Activated CD8-positive, alpha-beta memory T cell treated with anti-CD3 and anti-CD28 coated beads, Interleukin-2, amount 10 ng/mL, durations not matched to agents 7 days and 5 days (primary cell): ENCODE measurements at regions of chr17 and their contacts with region 1.

Region 1: GRCh38 chr17:64653325-64653984 is 8.7 kb downstream of the SMURF2 start:
- DNase-seq: no peak
- ATAC-seq: no peak
- H3K4me3 Mint-ChIP-seq: peak overlapping the region; percentile 58
- H3K27ac Mint-ChIP-seq: peak overlapping the region; percentile 84
- H3K4me1 Mint-ChIP-seq: peaks cover 51% of the 10 kb centered on the region
- H3K27me3 Mint-ChIP-seq: no peaks in the 10 kb centered on the region

Region 2: GRCh38 chr17:64506576-64507477 is 146.6 kb before region 1 on chr17 and contains the start of gene CEP95:
- CTCF ChIA-PET with region 1: interaction called, 17 read pairs
- DNase-seq: peak; percentile 98
- ATAC-seq: peak; percentile 72
- H3K4me3 Mint-ChIP-seq: peak within 1 kb of the TSS; percentile 100
- H3K27ac Mint-ChIP-seq: peak within 1 kb of the TSS; percentile 100
- H3K4me1 Mint-ChIP-seq: peaks cover 51% of the 10 kb centered on the region
- H3K27me3 Mint-ChIP-seq: peaks cover 2% of the 10 kb centered on the region
- total RNA-seq, gene CEP95: 45.7 to 52.6 TPM

Region 3: DNA sequence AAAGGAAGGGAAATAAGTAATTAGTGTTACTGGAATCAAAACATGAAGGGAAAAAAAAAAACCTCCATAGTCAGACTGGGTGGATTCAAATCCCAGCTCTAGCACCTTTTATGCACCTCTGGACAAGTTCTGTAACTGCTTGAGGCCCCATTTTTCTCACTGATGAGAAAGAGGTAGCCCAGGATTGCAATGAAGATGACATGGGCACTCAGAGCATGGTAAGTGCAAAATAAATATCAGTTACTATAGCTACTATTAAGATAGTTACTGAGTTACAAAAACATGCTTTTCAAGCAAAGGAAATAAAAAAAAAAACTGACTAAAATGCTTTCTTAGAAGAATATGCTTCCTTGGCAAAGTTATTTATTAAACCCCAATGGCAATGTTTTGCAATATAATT is 87.9 kb before region 1 on chr17:
- CTCF ChIA-PET with region 1: no interaction called
- DNase-seq: no peak
- ATAC-seq: no peak
- H3K4me3 Mint-ChIP-seq: no peak overlapping the region
- H3K27ac Mint-ChIP-seq: no peak overlapping the region
- H3K4me1 Mint-ChIP-seq: peaks cover 5% of the 10 kb centered on the region
- H3K27me3 Mint-ChIP-seq: no peaks in the 10 kb centered on the region

Region 4: DNA sequence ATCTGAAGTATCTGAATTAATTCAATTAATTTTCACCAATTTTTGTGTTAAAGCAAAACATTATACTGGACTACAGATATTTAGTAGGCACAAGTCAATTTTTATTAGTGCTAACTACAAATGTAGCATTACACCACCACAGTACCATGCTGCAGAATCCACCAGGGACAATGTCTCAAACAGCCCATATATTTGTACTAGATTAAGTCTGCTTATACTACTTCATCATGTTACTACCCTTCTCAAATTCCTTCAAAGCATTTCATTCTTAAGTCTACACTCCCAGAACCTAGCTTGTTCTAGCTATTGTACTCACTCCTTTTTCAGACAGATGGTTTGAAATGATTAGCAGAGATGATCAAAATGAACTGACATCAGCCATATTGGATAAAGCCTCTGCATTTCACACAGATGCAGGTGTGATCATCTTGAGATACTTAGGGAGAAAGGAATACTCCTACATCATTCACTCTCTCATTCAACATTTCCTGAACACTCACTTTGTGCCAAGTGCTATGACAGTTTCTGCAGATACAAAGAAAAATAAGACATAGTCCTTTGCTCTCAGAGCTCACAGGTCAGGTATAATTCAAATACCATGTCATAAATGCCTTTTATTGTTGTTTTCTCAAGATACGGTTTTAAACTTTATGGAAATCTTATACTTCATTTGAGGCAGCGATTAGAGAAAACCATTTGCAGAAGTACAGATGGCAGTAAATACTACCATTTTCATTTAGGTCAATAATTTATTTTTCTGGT is 39.0 kb before region 1 on chr17:
- CTCF ChIA-PET with region 1: no interaction called
- DNase-seq: no peak
- ATAC-seq: no peak
- H3K4me3 Mint-ChIP-seq: no peak overlapping the region
- H3K27ac Mint-ChIP-seq: no peak overlapping the region
- H3K4me1 Mint-ChIP-seq: peaks cover 1% of the 10 kb centered on the region
- H3K27me3 Mint-ChIP-seq: no peaks in the 10 kb centered on the region

Region 5: GRCh38 chr17:64628641-64629040 is 24.8 kb before region 1 on chr17:
- CTCF ChIA-PET with region 1: interaction called, 12 read pairs
- DNase-seq: peak; percentile 52
- ATAC-seq: peak; percentile 97
- H3K4me3 Mint-ChIP-seq: peak overlapping the region; percentile 47
- H3K27ac Mint-ChIP-seq: peak overlapping the region; percentile 57
- H3K4me1 Mint-ChIP-seq: peaks cover 36% of the 10 kb centered on the region
- H3K27me3 Mint-ChIP-seq: no peaks in the 10 kb centered on the region

Region 6: GRCh38 chr17:64679688-64680216 is 26.3 kb after region 1 on chr17:
- CTCF ChIA-PET with region 1: no interaction called
- DNase-seq: no peak
- ATAC-seq: no peak
- H3K4me3 Mint-ChIP-seq: no peak overlapping the region
- H3K27ac Mint-ChIP-seq: no peak overlapping the region
- H3K4me1 Mint-ChIP-seq: no peaks in the 10 kb centered on the region
- H3K27me3 Mint-ChIP-seq: no peaks in the 10 kb centered on the region

Region 7: GRCh38 chr17:64747938-64748540 is 94.6 kb after region 1 on chr17:
- CTCF ChIA-PET with region 1: no interaction called
- DNase-seq: no peak
- ATAC-seq: no peak
- H3K4me3 Mint-ChIP-seq: no peak overlapping the region
- H3K27ac Mint-ChIP-seq: no peak overlapping the region
- H3K4me1 Mint-ChIP-seq: peaks cover 11% of the 10 kb centered on the region
- H3K27me3 Mint-ChIP-seq: no peaks in the 10 kb centered on the region